Mammary epithelial cell (primary cell): ENCODE measurements at regions of chr19 and their contacts with region 1.

Region 1: DNA sequence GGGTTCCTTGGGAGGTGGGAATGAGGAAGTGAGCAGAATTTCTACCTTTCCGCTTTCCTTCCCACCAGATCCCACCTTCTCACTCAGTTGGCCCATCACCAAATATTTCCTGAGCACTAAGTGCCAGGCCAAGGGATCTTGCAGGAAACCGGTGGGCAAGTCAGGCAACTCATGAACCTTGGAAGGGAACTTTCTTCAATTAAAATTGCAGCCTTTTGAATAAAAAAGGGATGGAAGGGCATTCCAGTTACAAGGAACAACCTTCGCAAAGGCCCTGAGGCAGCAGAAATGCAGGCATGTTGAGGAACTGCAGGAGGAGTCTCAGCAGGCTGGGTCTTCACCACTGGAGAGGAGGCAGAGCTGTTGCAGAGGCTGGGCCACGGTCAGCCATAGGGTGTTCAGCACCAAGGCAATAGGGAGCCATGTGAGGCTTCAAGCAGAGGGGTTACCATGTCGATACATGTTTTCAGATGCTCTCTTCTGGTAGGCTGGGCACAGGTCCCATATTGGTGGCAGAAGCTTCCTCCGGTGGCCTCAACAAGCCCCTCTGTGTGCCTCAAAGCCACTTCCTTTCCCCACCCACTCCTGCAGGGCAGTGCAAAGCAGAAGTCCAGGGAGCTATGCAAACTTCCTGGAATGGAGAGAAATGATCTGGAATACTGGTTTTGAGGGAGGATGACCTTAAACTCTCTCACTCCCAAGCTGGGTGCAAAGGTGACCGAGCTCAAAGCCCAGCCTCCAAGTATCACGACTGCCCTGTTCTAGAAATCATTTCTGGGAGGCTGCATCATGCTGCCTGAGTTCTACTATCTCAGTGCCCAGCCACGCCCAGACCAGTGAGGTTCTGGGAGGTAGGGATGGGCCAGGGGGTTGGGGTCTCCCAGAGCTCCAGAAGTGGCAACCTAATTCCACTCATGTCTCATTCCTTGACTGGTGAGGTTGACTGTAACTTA is at the start of gene FUT6:
- DNase-seq: no peak
- H3K4me3 ChIP-seq: no peak within 1 kb of the TSS
- H3K27ac ChIP-seq: no peak within 1 kb of the TSS
- H3K4me1 ChIP-seq: no peaks in the 10 kb centered on the region
- H3K27me3 ChIP-seq: peaks cover 3% of the 10 kb centered on the region
- CTCF ChIP-seq: no peak
- total RNA-seq, gene FUT6: 0.17 TPM in 1 of 2 donors, not detected in the other

Region 2: GRCh38 chr19:5387472-5387871 is 451.9 kb before region 1 on chr19:
- CTCF ChIA-PET with region 1: no interaction called
- dilution Hi-C with region 1: no loop called
- in situ Hi-C with region 1: no loop called
- intact Hi-C with region 1: no loop called
- DNase-seq: no peak
- H3K4me3 ChIP-seq: no peak overlapping the region
- H3K27ac ChIP-seq: no peak overlapping the region
- H3K4me1 ChIP-seq: no peaks in the 10 kb centered on the region
- H3K27me3 ChIP-seq: peaks cover 2% of the 10 kb centered on the region
- CTCF ChIP-seq: no peak

Region 3: DNA sequence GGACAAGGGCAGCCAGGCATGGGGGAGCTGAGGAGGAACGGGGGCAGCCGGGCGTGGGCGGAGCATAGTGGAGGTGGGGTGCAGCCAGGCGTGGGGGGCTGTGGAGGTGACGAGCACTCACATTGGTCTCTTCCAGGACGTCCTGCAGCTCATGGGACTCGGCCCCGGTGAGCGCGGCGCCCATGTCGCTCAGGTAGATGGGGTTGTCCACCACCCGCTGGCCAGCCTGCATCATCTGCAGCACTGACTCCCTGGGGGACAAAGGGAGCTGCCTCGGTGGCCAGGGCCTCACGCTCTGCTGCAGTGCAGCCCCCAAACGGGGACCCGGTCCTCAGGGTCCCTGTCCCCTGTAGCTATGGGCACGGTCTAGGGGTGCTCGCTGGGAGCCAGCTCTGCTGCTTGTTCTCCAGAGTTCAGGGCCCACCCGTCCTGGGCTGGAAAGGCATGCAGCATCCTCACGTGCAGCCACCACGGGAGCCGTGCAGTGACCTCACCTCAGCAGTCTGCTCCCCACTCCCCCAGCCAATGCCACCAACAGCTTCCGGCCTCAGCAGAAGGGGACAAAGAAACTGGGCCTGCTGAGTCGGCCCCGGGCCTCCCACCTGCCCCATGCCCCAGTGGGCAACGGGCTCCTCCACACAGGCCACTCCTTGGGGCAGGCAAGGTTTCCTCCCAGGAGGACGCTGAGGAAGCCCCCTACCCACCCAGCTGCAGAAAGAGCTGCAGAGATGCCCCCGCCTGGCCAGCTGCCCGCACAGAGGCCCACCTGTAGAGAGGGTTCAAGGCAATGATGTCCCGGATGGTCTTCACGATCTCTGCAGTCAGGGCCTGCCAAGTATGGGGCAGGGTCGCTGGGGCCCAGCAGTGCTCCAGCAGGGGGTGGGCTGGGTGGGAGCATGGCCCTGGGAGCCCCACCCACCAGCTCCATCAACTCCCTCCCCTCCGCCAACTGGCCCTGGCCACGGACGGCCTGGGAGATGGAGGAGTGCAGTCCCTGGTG is 131.5 kb before region 1 on chr19:
- CTCF ChIA-PET with region 1: no interaction called
- dilution Hi-C with region 1: loop called (anchors 10 kb)
- in situ Hi-C with region 1: no loop called
- intact Hi-C with region 1: no loop called
- DNase-seq: no peak
- H3K4me3 ChIP-seq: no peak overlapping the region
- H3K27ac ChIP-seq: no peak overlapping the region
- H3K4me1 ChIP-seq: no peaks in the 10 kb centered on the region
- H3K27me3 ChIP-seq: no peaks in the 10 kb centered on the region
- CTCF ChIP-seq: no peak

Region 4: GRCh38 chr19:5877869-5878268 is 38.5 kb after region 1 on chr19:
- CTCF ChIA-PET with region 1: no interaction called
- dilution Hi-C with region 1: no loop called
- in situ Hi-C with region 1: no loop called
- intact Hi-C with region 1: loop called (anchors 5 kb)
- DNase-seq: no peak
- H3K4me3 ChIP-seq: no peak overlapping the region
- H3K27ac ChIP-seq: no peak overlapping the region
- H3K4me1 ChIP-seq: peaks cover 5% of the 10 kb centered on the region
- H3K27me3 ChIP-seq: no peaks in the 10 kb centered on the region
- CTCF ChIP-seq: no peak

Region 5: GRCh38 chr19:5904352-5905113 is 65.2 kb after region 1 on chr19 and contains the start of gene VMAC:
- CTCF ChIA-PET with region 1: no interaction called
- dilution Hi-C with region 1: no loop called
- in situ Hi-C with region 1: no loop called
- intact Hi-C with region 1: loop called (anchors 1 kb)
- DNase-seq: peak; percentile 100
- H3K4me3 ChIP-seq: peak within 1 kb of the TSS; percentile 70 to 82 (median 78)
- H3K27ac ChIP-seq: peak within 1 kb of the TSS; percentile 90
- H3K4me1 ChIP-seq: peaks cover 4% of the 10 kb centered on the region
- H3K27me3 ChIP-seq: no peaks in the 10 kb centered on the region
- CTCF ChIP-seq: no peak
- total RNA-seq, gene VMAC: 3.4 to 7.3 TPM

Region 6: GRCh38 chr19:5959666-5960338 is 120.5 kb after region 1 on chr19:
- CTCF ChIA-PET with region 1: no interaction called
- dilution Hi-C with region 1: loop called (anchors 5 kb)
- in situ Hi-C with region 1: no loop called
- intact Hi-C with region 1: no loop called
- DNase-seq: no peak
- H3K4me3 ChIP-seq: no peak overlapping the region
- H3K27ac ChIP-seq: no peak overlapping the region
- H3K4me1 ChIP-seq: no peaks in the 10 kb centered on the region
- H3K27me3 ChIP-seq: no peaks in the 10 kb centered on the region
- CTCF ChIP-seq: no peak